Right ventricle myocardium inferior (tissue), 1 donor: ENCODE measurements at regions of chr5 and their contacts with region 1.

Region 1: GRCh38 chr5:81856948-81857928 is 106.3 kb upstream of the SSBP2 start:
- DNase-seq: peak; percentile 85
- ATAC-seq: peak; percentile 92

Region 2: GRCh38 chr5:81971712-81972495 is 114.7 kb after region 1 on chr5 and contains the start of gene ATG10:
- intact Hi-C with region 1: loop called (anchors 5 kb)
- DNase-seq: peak; percentile 95
- ATAC-seq: peak; percentile 100
- total RNA-seq, gene ATG10: 3.9 TPM